ENCODE measurements at regions of chr1 and their contacts with region 1.

Region 1: DNA sequence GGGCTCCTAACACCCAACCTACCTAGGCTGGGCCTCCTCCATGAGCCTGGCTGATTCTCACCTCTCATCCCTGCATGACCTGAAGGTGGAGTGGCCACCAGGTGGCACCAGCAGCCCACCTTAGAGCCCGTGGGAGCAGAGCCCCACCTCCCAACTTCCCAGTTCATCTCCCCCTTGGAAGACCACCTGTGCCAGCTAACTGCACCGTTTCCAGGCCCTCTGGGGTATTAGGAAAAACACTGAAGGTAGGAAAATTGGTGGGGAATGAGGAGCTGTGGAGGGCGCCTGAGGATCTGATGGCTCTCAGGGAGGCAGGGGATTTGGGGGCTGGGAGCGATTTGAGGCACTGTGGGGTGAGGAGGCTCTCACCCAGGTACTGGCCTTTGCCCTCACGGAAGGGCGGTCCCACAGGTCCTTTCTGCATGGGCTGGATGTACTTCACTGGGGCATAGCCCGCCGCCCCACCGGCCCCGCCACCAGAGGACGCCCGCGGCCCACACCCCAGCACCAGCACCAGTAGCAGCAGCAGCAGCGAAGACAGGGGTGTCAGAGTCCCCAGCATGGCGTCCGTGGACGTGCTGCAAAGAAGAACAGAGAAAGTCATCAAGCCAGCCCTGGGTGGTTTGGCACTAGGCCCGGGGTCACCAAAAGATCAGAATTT is 11.1 kb downstream of the ADPRS start:
- DNase-seq: peak; percentile 63
- H3K4me3 Mint-ChIP-seq: no peak overlapping the region
- H3K27ac Mint-ChIP-seq: no peak overlapping the region
- H3K4me1 Mint-ChIP-seq: peaks cover 3% of the 10 kb centered on the region
- H3K27me3 Mint-ChIP-seq: no peaks in the 10 kb centered on the region

Region 2: DNA sequence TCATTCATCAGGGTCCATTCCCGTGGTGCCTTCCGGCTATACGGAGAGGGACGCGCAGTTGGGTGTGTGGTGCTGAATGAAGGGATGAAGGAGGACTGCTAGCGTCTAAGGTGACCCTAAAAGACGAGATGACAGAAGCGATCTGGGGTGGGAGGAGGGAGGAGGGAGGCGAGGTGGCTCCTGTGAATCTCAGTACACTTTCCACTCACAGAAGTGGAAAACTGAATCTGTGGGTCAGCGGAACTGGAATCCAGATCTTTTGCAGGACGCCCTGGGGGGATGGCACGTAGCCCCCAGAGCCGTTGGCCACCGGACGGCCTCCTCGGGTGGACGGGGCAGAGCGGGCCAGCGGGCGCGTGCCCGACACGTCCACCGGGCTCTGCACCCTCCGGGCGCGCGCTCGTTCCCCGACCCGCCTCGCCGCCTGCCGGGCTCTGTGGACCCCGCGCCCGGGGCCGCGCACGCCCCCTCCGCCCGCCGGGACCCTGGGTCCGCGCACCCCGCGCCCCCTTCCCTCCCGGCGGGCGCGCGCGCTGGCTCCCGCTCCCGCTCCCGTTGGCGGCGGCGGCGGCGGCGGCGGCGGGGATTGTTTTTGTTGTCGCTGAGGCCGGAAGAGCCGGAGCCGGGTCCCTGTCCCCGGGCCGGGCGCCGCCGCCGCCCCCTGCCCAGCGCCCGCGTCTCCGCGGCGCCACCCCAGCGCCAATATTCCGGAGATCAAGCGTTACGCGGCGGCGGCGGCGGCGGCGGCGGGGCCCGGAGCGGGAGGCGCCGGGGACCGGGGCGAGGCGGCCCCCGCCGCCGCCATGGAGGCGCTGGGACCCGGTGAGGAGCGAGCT is 292.0 kb before region 1 on chr1 and contains the start of gene AGO4:
- intact Hi-C with region 1: no loop called
- DNase-seq: peak; percentile 16
- H3K4me3 Mint-ChIP-seq: peak within 1 kb of the TSS; percentile 89
- H3K27ac Mint-ChIP-seq: peak within 1 kb of the TSS; percentile 91
- H3K4me1 Mint-ChIP-seq: peaks cover 28% of the 10 kb centered on the region
- H3K27me3 Mint-ChIP-seq: no peaks in the 10 kb centered on the region
- total RNA-seq, gene AGO4: 9.2 and 10.0 TPM in 2 replicates

Region 3: DNA sequence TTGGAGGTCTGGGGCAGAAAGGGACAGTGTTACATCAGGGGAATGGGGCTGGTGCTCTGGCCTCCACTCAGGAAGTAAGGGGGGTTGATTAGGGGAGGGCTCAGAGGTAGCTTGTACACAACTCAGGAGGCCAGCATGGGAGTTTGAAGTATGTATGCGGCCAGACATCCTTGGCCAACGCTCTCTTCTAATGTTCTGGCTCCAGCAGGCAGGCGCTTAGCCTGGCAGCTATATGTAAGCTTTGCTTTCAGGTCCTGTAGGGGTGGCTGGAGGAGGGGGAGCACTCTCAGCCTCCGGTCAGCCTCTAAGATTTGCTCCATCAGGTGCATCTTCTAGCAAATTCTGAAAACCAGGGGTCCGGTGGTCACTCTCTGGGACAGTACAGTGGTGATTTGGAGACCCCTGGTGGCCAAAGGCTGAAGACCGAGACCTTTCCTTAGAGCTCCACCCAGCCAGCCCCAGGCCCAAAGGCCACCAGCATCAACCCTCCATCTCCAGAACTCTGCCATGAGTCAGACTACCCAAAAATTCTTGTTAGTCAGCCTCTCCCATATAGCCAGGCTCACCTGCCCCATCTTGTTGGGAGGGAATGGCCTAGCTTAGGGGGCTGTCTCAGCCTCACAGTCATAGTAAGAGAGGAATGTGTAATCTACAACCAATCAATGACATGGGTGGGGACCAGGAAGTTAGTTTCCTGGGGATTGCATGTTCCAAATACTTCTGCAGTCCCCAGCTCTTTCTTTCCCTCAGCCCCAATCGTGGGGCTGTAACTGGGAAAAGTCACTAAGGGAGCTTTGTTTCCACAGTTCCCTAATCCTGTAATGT is 34.9 kb after region 1 on chr1:
- intact Hi-C with region 1: loop called (anchors 1 kb)
- DNase-seq: no peak
- H3K4me3 Mint-ChIP-seq: no peak overlapping the region
- H3K27ac Mint-ChIP-seq: no peak overlapping the region
- H3K4me1 Mint-ChIP-seq: peaks cover 7% of the 10 kb centered on the region
- H3K27me3 Mint-ChIP-seq: no peaks in the 10 kb centered on the region

Region 4: GRCh38 chr1:36187800-36188593 is 88.2 kb after region 1 on chr1:
- intact Hi-C with region 1: loop called (anchors 1 kb)
- DNase-seq: peak; percentile 69
- H3K4me3 Mint-ChIP-seq: no peak overlapping the region
- H3K27ac Mint-ChIP-seq: peak overlapping the region; percentile 70
- H3K4me1 Mint-ChIP-seq: peaks cover 5% of the 10 kb centered on the region
- H3K27me3 Mint-ChIP-seq: no peaks in the 10 kb centered on the region

Region 5: DNA sequence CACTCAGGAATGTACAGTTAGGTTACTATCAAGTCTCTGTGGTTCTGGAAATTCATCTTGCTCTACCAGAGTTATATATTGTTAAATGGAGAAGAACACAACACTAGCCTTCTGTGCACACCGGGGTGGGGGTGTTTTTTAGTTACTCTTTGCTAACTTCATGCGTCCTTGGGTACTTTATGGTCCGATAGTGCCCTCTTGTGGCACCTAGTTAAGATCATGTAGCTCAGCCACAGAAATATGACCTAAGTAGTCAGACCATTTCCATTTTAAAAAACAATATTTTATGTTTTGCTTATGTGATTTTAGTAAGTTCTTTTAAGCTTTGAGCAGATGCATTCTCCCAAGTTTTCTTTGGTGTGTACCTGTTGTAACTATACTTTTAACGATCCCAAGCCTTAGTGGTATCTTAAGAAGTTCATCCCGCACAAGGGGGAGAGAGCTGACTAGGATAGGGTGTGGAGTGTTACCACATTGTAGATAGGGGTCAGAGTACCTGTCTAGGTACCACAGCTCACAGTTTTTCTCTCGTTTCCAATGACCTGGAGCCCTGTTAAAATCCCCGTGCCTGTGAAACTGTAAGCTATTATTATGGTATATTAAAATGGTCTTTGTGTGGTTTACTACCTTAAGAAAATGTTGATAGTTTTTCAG is 185.8 kb after region 1 on chr1:
- intact Hi-C with region 1: loop called (anchors 5 kb)
- DNase-seq: peak; percentile 51
- H3K4me3 Mint-ChIP-seq: no peak overlapping the region
- H3K27ac Mint-ChIP-seq: peak overlapping the region; percentile 73
- H3K4me1 Mint-ChIP-seq: peaks cover 27% of the 10 kb centered on the region
- H3K27me3 Mint-ChIP-seq: no peaks in the 10 kb centered on the region

Region 6: DNA sequence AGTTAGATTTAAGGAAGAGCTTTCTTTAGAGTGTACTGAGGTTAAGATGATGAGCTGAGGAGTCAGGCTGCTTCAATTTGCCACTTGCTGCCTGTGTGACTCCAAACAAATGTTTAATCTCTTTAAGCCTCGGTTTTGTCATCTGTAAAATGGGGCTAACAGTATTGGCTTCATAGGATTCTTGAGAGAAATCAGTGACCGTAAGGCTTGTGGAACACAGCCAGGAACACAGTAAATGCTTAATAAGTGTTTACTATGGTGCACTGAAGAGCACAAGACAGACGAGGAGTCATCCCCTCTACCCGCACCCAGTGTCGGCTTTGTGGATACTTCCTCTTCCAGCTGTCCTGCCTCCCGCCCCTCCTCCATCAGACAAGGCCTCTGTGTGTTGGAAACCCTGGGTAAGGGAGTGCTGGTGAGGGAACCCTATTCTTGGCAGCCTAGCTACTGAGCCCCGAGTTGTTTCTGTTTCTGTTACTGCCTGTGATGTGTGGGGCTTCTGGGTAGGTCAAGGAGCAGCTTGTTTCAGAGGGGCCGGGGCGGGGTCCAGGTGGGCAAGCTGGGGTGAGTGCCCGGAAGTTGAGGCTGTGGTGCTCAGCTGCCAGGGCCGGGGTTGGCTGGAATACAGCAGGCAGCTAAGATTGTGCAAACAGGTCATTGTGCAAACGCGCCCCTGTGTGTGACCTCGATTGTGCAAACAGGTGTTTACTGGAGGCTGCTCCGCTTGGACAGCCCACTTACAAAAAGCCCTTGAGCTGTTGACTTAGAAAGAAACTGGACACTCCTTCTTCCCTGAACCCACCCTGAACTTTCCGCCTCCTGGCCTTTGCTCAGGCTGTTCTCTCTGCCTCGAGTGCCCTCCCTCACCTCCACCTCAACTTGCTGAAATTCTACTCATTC is 386.9 kb after region 1 on chr1:
- intact Hi-C with region 1: no loop called
- DNase-seq: no peak
- H3K4me3 Mint-ChIP-seq: no peak overlapping the region
- H3K27ac Mint-ChIP-seq: no peak overlapping the region
- H3K4me1 Mint-ChIP-seq: peaks cover 8% of the 10 kb centered on the region
- H3K27me3 Mint-ChIP-seq: no peaks in the 10 kb centered on the region

Measured in activated T-helper 2 cell treated with anti-CD3 and anti-CD28 coated beads, Interferon-gamma antibody, Interleukin-2, Interleukin-4, amounts not matched to agents 10 μg/mL and 5 μg/mL and 100 μg/mL, durations not matched to agents 14 hours and 24 hours and 36 hours (primary cell).